ENCODE measurements at regions of chr4 and their contacts with region 1.

Region 1: GRCh38 chr4:26719954-26720552 is 136.2 kb downstream of the TBC1D19 start:
- DNase-seq: no peak
- H3K4me3 Mint-ChIP-seq: no peak overlapping the region
- H3K27ac Mint-ChIP-seq: no peak overlapping the region
- H3K4me1 Mint-ChIP-seq: no peaks in the 10 kb centered on the region
- H3K27me3 Mint-ChIP-seq: peaks cover 2% of the 10 kb centered on the region

Region 2: DNA sequence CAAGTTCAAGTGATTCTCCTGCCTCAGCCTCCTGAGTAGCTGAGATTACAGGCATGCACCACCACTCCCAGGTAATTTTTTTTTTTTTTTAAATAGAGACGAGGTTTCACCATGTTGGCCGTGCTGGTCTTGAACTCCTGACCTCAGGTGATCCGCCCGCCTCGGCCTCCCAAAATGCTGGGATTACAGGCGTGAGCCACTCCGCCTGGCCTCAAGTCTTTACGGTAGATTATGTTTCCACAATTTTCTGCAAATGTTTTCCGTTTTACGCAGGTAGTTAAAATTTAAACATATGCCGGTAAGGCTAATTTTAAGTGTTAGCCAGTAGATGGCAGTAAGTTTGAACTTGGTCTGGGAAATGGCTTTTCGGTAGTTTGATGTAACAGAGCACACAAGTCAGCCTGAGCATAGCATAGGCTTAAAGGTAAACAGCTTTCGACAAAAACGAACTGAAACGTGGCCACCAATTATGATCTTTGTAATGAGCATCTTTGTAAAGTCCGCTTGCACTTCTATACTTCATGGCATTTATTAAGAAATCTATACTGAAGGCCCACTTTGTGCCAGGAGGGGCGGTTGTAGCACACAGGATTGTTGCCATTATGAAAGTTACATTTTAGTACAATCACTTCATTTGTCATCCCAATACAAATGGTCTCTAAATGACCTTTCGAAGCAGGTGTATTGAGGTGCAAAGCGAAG is 260.8 kb before region 1 on chr4:
- intact Hi-C with region 1: loop called (anchors 1 kb)
- DNase-seq: no peak
- H3K4me3 Mint-ChIP-seq: no peak overlapping the region
- H3K27ac Mint-ChIP-seq: no peak overlapping the region
- H3K4me1 Mint-ChIP-seq: peaks cover 13% of the 10 kb centered on the region
- H3K27me3 Mint-ChIP-seq: peaks cover 2% of the 10 kb centered on the region

Region 3: GRCh38 chr4:27397886-27398285 is 677.8 kb after region 1 on chr4:
- intact Hi-C with region 1: no loop called
- DNase-seq: no peak
- H3K4me3 Mint-ChIP-seq: no peak overlapping the region
- H3K27ac Mint-ChIP-seq: no peak overlapping the region
- H3K4me1 Mint-ChIP-seq: no peaks in the 10 kb centered on the region
- H3K27me3 Mint-ChIP-seq: no peaks in the 10 kb centered on the region

Measured in activated T-helper 1 cell treated with anti-CD3 and anti-CD28 coated beads, Interleukin-12 subunit alpha, Interleukin-12 subunit beta, Interleukin-2, Interleukin-4 antibody, amounts not matched to agents 30 ng/mL and 10 ng/mL and 1 ng/mL, durations not matched to agents 14 hours and 24 hours and 36 hours (primary cell).